GM10248 (cell line): ENCODE measurements at regions of chr16 and their contacts with region 1.

Region 1: GRCh38 chr16:24539291-24539849 is at the start of gene RBBP6:
- DNase-seq: peak; percentile 93
- CTCF ChIP-seq: peak; percentile 40

Region 2: GRCh38 chr16:24552705-24553246 is 13.4 kb after region 1 on chr16:
- CTCF ChIA-PET with region 1: interaction called, 20 read pairs
- POLR2A ChIA-PET with region 1: interaction called, 4 read pairs
- DNase-seq: no peak
- CTCF ChIP-seq: no peak